ENCODE measurements at regions of chr2 and their contacts with region 1.

Region 1: GRCh38 chr2:11124503-11125068 is 30.7 kb upstream of the SLC66A3 start:
- DNase-seq: peak; percentile 47 to 97
- H3K4me3 ChIP-seq: no peak overlapping the region
- H3K27ac ChIP-seq: no peak overlapping the region
- H3K4me1 ChIP-seq: peaks cover 0 to 4% (median 0%) of the 10 kb centered on the region in 4 experiments; a peak in 5 of 7 replicates
- H3K27me3 ChIP-seq: peaks cover 0 to 3% (median 1%) of the 10 kb centered on the region in 4 experiments; a peak in 4 of 7 replicates
- CTCF ChIP-seq: peak; percentile 94 to 98 (median 94)
- EP300 ChIP-seq: no peak
- POLR2A ChIP-seq: no peak
- RAD21 ChIP-seq: peak; percentile 96

Region 2: GRCh38 chr2:10729666-10730065 is 394.9 kb before region 1 on chr2:
- CTCF ChIA-PET with region 1: no interaction called
- POLR2A ChIA-PET with region 1: no interaction called
- DNase-seq: no peak
- H3K4me3 ChIP-seq: no peak overlapping the region
- H3K27ac ChIP-seq: no peak overlapping the region
- H3K4me1 ChIP-seq: no peaks in the 10 kb centered on the region
- H3K27me3 ChIP-seq: no peaks in the 10 kb centered on the region
- CTCF ChIP-seq: no peak
- EP300 ChIP-seq: no peak
- POLR2A ChIP-seq: no peak
- RAD21 ChIP-seq: no peak

Region 3: GRCh38 chr2:10837298-10838266 is 287.0 kb before region 1 on chr2:
- CTCF ChIA-PET with region 1: interaction called, 209 read pairs
- POLR2A ChIA-PET with region 1: interaction called, 6 read pairs
- DNase-seq: no peak
- H3K4me3 ChIP-seq: no peak overlapping the region
- H3K27ac ChIP-seq: no peak overlapping the region
- H3K4me1 ChIP-seq: no peaks in the 10 kb centered on the region; a peak in 3 of 7 replicates
- H3K27me3 ChIP-seq: peaks cover 0 to 7% (median 4%) of the 10 kb centered on the region in 4 experiments; a peak in 3 of 7 replicates
- CTCF ChIP-seq: no peak
- EP300 ChIP-seq: no peak
- POLR2A ChIP-seq: no peak
- RAD21 ChIP-seq: no peak

Region 4: GRCh38 chr2:10900216-10901109 is 224.1 kb before region 1 on chr2:
- CTCF ChIA-PET with region 1: interaction called, 10 read pairs
- POLR2A ChIA-PET with region 1: no interaction called
- DNase-seq: no peak
- H3K4me3 ChIP-seq: no peak overlapping the region
- H3K27ac ChIP-seq: no peak overlapping the region
- H3K4me1 ChIP-seq: no peaks in the 10 kb centered on the region
- H3K27me3 ChIP-seq: no peaks in the 10 kb centered on the region
- CTCF ChIP-seq: peak in 2 of 3 experiments; percentile 7 to 17; a peak in 1 of 4 replicates
- EP300 ChIP-seq: no peak
- POLR2A ChIP-seq: no peak
- RAD21 ChIP-seq: peak in 1 of 2 experiments; percentile 22; a peak in 1 of 4 replicates

Region 5: GRCh38 chr2:11073251-11073650 is 51.3 kb before region 1 on chr2:
- CTCF ChIA-PET with region 1: interaction called, 29 read pairs
- POLR2A ChIA-PET with region 1: no interaction called
- DNase-seq: peak; percentile 60 to 83
- H3K4me3 ChIP-seq: no peak overlapping the region
- H3K27ac ChIP-seq: no peak overlapping the region
- H3K4me1 ChIP-seq: peaks cover 0 to 6% (median 4%) of the 10 kb centered on the region in 4 experiments; a peak in 4 of 7 replicates
- H3K27me3 ChIP-seq: no peaks in the 10 kb centered on the region
- CTCF ChIP-seq: peak; percentile 76 to 96 (median 93)
- EP300 ChIP-seq: no peak
- POLR2A ChIP-seq: no peak
- RAD21 ChIP-seq: peak; percentile 61 to 73

Region 6: GRCh38 chr2:11097038-11097720 is 27.4 kb before region 1 on chr2:
- CTCF ChIA-PET with region 1: interaction called, 84 read pairs
- POLR2A ChIA-PET with region 1: no interaction called
- DNase-seq: no peak
- H3K4me3 ChIP-seq: no peak overlapping the region
- H3K27ac ChIP-seq: no peak overlapping the region
- H3K4me1 ChIP-seq: peaks cover 0 to 4% (median 1%) of the 10 kb centered on the region in 4 experiments; a peak in 3 of 7 replicates
- H3K27me3 ChIP-seq: no peaks in the 10 kb centered on the region
- CTCF ChIP-seq: no peak
- EP300 ChIP-seq: no peak
- POLR2A ChIP-seq: no peak
- RAD21 ChIP-seq: no peak

Region 7: GRCh38 chr2:11112870-11113452 is 11.6 kb before region 1 on chr2:
- CTCF ChIA-PET with region 1: interaction called, 90 read pairs
- POLR2A ChIA-PET with region 1: no interaction called
- DNase-seq: no peak
- H3K4me3 ChIP-seq: no peak overlapping the region
- H3K27ac ChIP-seq: no peak overlapping the region
- H3K4me1 ChIP-seq: no peaks in the 10 kb centered on the region
- H3K27me3 ChIP-seq: no peaks in the 10 kb centered on the region; a peak in 1 of 7 replicates
- CTCF ChIP-seq: no peak
- EP300 ChIP-seq: no peak
- POLR2A ChIP-seq: no peak
- RAD21 ChIP-seq: no peak